ENCODE measurements at regions of chr9 and their contacts with region 1.

Region 1: DNA sequence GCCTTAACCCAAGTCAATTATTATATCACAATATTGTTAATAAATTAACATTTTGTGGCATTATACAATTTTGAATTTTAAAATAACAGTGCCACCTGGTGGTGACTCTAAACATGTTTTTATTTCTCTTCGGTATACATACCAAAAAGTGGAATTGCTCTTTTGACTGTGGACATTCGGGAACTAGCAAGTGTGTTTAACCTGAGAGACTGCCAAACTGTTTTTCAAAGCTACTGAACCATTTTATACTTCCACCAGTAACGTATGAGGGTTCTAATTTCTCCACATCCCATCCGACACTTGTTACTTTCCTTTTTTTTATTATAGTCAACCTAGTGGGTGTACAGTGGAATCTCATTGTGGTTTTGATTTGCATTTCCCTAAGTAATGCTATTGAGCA is 18.3 kb upstream of the HSDL2 start:
- DNase-seq: peak in 4 of 42 donors; percentile 22 to 49 (median 39)

Region 2: GRCh38 chr9:112086627-112087026 is 275.0 kb before region 1 on chr9:
- intact Hi-C with region 1: loop called (anchors 5 kb)
- DNase-seq: no peak

Region 3: GRCh38 chr9:113131689-113132151 is 770.1 kb after region 1 on chr9:
- intact Hi-C with region 1: no loop called
- DNase-seq: peak in 13 of 42 donors; percentile 13 to 80 (median 42)